GM12878 (cell line): ENCODE measurements at regions of chr14 and their contacts with region 1.

Region 1: DNA sequence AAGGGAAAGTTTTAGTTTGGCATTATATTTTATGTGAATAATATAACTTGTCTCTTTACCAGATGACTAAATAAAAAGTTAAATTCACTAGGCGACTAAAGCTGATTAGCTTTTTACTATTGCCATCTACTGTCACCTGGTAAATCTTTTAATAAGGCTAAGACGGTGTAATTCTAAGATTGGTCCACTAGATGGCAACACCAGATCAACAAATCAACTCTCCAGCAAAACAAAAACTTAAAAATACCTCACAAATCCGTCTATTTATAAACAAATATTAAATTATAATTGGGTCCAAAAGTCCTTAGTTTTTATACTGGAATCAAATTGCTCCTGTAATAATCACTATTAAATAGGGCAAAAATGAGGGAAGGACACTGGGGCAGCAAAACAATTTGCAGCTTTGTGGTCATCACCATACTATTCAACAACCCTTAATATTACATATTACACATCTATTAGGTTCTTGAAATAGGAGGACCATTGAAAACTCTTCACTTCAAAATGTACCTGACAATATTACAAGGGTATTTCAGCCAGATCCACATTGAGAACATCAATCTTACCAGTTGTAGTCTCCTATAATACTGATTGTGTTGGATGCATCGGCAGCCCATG is 47.9 kb downstream of the GALC start:
- DNase-seq: no peak
- ATAC-seq: 0 out of 3 replicates have a peak, but pooled peaks have one; percentile 22
- H3K4me3 ChIP-seq: no peak overlapping the region
- H3K27ac ChIP-seq: no peak overlapping the region
- H3K4me1 ChIP-seq: peaks cover 9% of the 10 kb centered on the region
- H3K27me3 ChIP-seq: no peaks in the 10 kb centered on the region
- CTCF ChIP-seq: peak; percentile 47 to 69 (median 54); a peak in 4 of 6 replicates
- EP300 ChIP-seq: no peak
- POLR2A ChIP-seq: no peak
- RAD21 ChIP-seq: peak; percentile 81

Region 2: DNA sequence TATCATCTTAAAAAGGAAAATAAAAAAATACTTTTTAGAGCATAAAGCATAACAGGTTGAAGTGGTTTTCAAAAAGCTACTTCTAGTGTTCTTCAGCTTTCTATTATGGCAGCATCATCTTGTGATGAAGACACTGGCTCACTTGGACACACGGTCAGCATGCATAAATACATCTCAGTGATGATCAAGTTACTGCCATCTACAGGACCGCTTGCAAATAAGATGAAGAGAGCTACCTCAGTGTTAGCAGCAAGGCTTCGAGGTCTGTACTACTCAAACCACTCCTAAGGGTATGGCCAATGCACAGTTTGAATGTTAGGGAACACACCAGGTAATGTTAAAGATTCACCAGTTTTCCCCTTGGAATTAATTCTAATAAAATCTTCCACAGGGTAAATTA is 10.9 kb before region 1 on chr14:
- CTCF ChIA-PET with region 1: interaction called, 29 read pairs
- POLR2A ChIA-PET with region 1: no interaction called
- RAD21 ChIA-PET with region 1: interaction called, 6 read pairs
- SMC1A ChIA-PET with region 1: interaction called, 14 read pairs
- in situ Hi-C with region 1: no loop called
- intact Hi-C with region 1: no loop called
- DNase-seq: no peak
- ATAC-seq: peak; percentile 70
- H3K4me3 ChIP-seq: no peak overlapping the region
- H3K27ac ChIP-seq: no peak overlapping the region
- H3K4me1 ChIP-seq: no peaks in the 10 kb centered on the region
- H3K27me3 ChIP-seq: no peaks in the 10 kb centered on the region
- CTCF ChIP-seq: no peak
- EP300 ChIP-seq: no peak
- POLR2A ChIP-seq: no peak
- RAD21 ChIP-seq: no peak

Region 3: GRCh38 chr14:88005978-88006851 is 61.1 kb after region 1 on chr14:
- CTCF ChIA-PET with region 1: interaction called, 14 read pairs
- POLR2A ChIA-PET with region 1: no interaction called
- RAD21 ChIA-PET with region 1: interaction called, 4 read pairs
- SMC1A ChIA-PET with region 1: interaction called, 11 read pairs
- in situ Hi-C with region 1: no loop called
- intact Hi-C with region 1: loop called (anchors 2 kb)
- DNase-seq: peak; percentile 77
- ATAC-seq: peak; percentile 83
- H3K4me3 ChIP-seq: peak overlapping the region; percentile 72
- H3K27ac ChIP-seq: peak overlapping the region; percentile 87
- H3K4me1 ChIP-seq: peaks cover 16% of the 10 kb centered on the region
- H3K27me3 ChIP-seq: no peaks in the 10 kb centered on the region
- CTCF ChIP-seq: no peak
- EP300 ChIP-seq: peak; percentile 79 to 85; a peak in 3 of 4 replicates
- POLR2A ChIP-seq: peak; percentile 56
- RAD21 ChIP-seq: 0 out of 2 replicates have a peak, but pooled peaks have one; percentile 8

Region 4: DNA sequence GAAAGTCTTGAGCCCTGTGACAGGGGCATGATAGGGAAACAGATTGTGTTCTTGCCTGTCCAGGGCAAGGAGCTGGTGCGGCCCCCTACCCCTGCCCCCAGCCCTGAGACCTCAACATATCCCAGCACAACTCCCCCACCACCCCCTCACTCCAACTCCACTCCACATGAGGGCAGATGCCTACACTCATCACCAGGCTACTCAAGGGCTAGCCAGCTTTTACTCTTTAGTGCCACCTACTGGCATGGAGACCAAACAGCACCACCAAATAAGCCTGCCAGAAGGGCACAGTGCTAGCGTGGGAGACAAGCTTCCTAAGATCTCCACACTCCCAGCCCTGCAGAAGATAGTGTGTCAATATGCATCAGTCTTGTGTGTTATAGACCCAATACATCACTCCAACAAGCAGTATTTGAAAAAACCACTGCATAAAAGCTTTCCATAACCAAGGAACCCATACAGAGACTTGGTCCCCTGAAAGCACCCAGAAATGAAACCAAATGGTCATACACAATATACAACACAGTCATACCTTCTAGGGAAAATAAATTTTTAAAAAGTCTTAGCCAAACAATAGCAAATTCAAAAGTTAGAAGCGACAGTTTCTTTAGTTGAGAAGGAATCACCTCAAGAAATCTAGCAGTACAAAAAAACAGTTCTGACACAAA is 223.5 kb after region 1 on chr14:
- CTCF ChIA-PET with region 1: interaction called, 96 read pairs
- POLR2A ChIA-PET with region 1: no interaction called
- RAD21 ChIA-PET with region 1: interaction called, 9 read pairs
- SMC1A ChIA-PET with region 1: interaction called, 35 read pairs
- in situ Hi-C with region 1: no loop called
- intact Hi-C with region 1: loop called (anchors 1 kb)
- DNase-seq: no peak
- ATAC-seq: peak; percentile 98
- H3K4me3 ChIP-seq: no peak overlapping the region
- H3K27ac ChIP-seq: no peak overlapping the region
- H3K4me1 ChIP-seq: peaks cover 5% of the 10 kb centered on the region
- H3K27me3 ChIP-seq: no peaks in the 10 kb centered on the region
- CTCF ChIP-seq: peak; percentile 76 to 87 (median 76)
- EP300 ChIP-seq: no peak
- POLR2A ChIP-seq: no peak
- RAD21 ChIP-seq: peak; percentile 74

Region 5: DNA sequence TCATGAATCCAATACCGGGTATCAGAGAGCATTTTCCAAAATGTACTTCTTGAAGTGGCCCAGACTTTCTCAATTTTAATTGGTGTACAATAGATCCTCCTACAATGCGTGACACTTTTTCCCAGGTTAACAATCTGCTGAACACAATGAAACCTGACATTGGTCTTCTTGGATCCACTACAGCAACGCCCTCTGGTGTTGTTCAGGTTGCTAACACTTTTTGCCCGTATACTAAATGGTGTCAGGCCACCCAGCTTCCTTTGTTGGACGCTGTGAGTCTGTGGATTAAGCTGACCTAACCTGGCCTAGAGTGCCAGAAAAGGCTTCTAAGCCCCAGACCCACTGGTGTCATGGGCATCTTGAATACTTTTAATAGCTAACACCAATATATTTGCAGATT is 288.8 kb after region 1 on chr14:
- CTCF ChIA-PET with region 1: interaction called, 48 read pairs
- POLR2A ChIA-PET with region 1: no interaction called
- RAD21 ChIA-PET with region 1: interaction called, 12 read pairs
- SMC1A ChIA-PET with region 1: interaction called, 6 read pairs
- in situ Hi-C with region 1: loop called (anchors 10 kb)
- intact Hi-C with region 1: loop called (anchors 2 kb)
- DNase-seq: no peak
- ATAC-seq: peak; percentile 64
- H3K4me3 ChIP-seq: no peak overlapping the region
- H3K27ac ChIP-seq: no peak overlapping the region
- H3K4me1 ChIP-seq: no peaks in the 10 kb centered on the region
- H3K27me3 ChIP-seq: no peaks in the 10 kb centered on the region
- CTCF ChIP-seq: peak; percentile 40 to 52 (median 48); a peak in 4 of 6 replicates
- EP300 ChIP-seq: no peak
- POLR2A ChIP-seq: no peak
- RAD21 ChIP-seq: peak; percentile 40; the same call in 1 of the 2 replicates

Region 6: GRCh38 chr14:88492272-88493089 is 547.4 kb after region 1 on chr14:
- CTCF ChIA-PET with region 1: interaction called, 5 read pairs
- POLR2A ChIA-PET with region 1: no interaction called
- RAD21 ChIA-PET with region 1: no interaction called
- SMC1A ChIA-PET with region 1: interaction called, 3 read pairs
- in situ Hi-C with region 1: no loop called
- intact Hi-C with region 1: loop called (anchors 5 kb)
- DNase-seq: peak; percentile 19
- ATAC-seq: peak; percentile 96
- H3K4me3 ChIP-seq: no peak overlapping the region
- H3K27ac ChIP-seq: no peak overlapping the region
- H3K4me1 ChIP-seq: no peaks in the 10 kb centered on the region
- H3K27me3 ChIP-seq: no peaks in the 10 kb centered on the region; a peak in 1 of 4 replicates
- CTCF ChIP-seq: peak; percentile 72 to 85 (median 75)
- EP300 ChIP-seq: no peak
- POLR2A ChIP-seq: no peak
- RAD21 ChIP-seq: peak; percentile 70